Mammary epithelial cell (primary cell): ENCODE measurements at regions of chr7 and their contacts with region 1.

Region 1: DNA sequence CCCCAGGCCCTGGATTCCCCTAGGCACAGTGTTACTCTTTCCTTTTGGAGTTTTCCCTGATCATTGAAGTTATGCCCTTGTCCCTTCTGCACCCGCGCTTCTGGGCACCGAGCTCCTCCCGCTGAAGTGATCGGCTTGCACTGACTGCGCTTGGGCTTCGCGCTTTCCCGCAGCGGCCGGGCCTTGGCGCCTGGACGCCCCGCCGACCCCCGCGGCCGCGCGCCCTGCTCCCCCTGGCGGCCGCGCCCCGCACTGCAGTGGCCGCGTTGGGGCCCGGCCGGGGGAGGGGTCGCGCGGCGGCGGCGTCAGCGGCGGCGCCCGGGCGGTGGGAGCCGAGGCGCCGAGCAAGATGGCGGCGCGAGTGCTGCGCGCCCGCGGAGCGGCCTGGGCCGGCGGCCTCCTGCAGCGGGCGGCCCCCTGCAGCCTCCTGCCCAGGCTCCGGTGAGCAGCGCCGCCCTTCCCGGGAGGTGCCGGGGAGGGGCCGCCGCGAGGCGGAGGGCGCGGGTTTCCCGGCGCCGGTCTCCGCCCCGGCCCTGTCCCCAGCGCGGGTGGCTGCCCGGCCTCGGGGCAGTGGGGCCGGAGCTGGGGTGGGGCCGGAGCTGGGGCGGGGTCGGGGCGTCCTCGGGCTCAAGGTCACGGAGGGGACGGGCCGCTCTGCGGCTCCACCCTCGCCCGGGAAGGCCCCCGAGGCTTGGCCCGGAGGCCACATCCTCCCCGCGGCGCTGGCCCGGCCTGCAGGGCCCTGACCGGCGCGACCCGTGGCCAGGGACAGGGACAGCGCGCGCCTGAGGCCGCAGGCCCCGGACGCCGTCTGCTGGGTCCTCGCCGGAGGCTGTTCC is at the start of gene NIPSNAP2:
- DNase-seq: peak; percentile 30
- H3K4me3 ChIP-seq: peak within 1 kb of the TSS; percentile 51 to 64 (median 60)
- H3K27ac ChIP-seq: peak within 1 kb of the TSS; percentile 68
- H3K4me1 ChIP-seq: peaks cover 18% of the 10 kb centered on the region
- H3K27me3 ChIP-seq: no peaks in the 10 kb centered on the region
- CTCF ChIP-seq: peak; percentile 16 to 37
- total RNA-seq, gene NIPSNAP2: 56.5 to 60.7 TPM

Region 2: DNA sequence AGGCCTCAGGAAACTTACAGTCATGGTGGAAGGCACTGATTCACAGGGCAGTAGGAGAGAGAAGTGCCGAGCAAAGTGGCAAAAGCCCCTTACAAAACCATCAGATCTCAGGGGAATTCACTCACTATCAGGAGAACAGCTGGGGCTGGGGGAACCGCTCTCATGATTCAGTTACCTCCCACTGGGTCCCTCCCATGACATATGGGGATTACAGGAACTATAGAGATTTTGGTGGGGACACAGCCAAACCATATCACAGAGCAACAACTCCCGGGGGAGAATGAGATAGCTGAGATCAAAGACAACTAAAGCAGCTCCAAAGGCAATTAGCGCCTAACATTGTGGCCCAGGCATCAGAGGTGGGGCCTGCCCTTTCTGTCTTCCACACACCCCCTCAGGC is 306.8 kb before region 1 on chr7:
- CTCF ChIA-PET with region 1: no interaction called
- dilution Hi-C with region 1: no loop called
- in situ Hi-C with region 1: no loop called
- intact Hi-C with region 1: no loop called
- DNase-seq: no peak
- H3K4me3 ChIP-seq: no peak overlapping the region
- H3K27ac ChIP-seq: no peak overlapping the region
- H3K4me1 ChIP-seq: no peaks in the 10 kb centered on the region
- H3K27me3 ChIP-seq: no peaks in the 10 kb centered on the region
- CTCF ChIP-seq: no peak

Region 3: DNA sequence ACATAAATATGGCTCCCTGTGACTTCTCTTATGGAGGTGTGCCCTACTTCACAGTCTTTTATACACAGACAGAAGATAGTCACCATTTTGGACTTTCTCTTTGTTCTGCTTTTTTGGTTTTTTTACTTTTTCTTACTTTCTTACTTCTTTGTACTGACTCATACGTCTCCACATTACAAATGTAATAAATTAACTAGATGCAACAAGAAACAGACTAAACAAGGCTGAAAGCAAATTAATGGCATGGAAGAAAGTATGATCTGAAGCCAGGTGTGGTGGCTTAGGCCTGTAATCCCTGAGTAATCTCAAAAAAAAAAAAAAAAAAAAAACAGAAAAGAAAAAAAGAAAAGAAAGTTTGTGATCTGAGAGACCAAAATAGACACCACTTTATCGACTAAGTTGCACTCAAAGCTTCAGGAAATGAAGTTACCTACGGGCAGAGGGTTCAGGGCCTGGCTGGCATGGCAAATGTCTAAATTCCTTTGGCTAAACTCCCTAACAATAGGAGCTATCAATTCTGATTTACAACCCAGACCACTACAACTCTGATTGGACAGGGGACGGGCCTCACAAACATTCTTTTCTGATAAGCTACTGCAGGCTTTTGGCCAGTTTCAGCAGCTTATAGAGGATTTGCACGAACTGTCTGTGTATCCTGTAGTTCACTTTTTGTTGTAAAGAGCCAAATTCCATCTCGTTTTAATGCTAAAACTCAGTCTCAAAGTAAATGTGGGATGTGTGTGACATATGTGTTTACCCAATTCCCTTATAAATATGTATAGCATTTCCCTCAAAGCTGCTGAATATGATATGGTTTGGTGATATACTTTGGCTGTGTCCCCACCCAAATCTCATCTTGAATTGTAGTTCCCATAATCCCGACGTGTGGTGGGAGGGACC is 231.0 kb before region 1 on chr7:
- CTCF ChIA-PET with region 1: no interaction called
- dilution Hi-C with region 1: no loop called
- in situ Hi-C with region 1: no loop called
- intact Hi-C with region 1: no loop called
- DNase-seq: no peak
- H3K4me3 ChIP-seq: no peak overlapping the region
- H3K27ac ChIP-seq: no peak overlapping the region
- H3K4me1 ChIP-seq: no peaks in the 10 kb centered on the region
- H3K27me3 ChIP-seq: no peaks in the 10 kb centered on the region
- CTCF ChIP-seq: no peak

Region 4: DNA sequence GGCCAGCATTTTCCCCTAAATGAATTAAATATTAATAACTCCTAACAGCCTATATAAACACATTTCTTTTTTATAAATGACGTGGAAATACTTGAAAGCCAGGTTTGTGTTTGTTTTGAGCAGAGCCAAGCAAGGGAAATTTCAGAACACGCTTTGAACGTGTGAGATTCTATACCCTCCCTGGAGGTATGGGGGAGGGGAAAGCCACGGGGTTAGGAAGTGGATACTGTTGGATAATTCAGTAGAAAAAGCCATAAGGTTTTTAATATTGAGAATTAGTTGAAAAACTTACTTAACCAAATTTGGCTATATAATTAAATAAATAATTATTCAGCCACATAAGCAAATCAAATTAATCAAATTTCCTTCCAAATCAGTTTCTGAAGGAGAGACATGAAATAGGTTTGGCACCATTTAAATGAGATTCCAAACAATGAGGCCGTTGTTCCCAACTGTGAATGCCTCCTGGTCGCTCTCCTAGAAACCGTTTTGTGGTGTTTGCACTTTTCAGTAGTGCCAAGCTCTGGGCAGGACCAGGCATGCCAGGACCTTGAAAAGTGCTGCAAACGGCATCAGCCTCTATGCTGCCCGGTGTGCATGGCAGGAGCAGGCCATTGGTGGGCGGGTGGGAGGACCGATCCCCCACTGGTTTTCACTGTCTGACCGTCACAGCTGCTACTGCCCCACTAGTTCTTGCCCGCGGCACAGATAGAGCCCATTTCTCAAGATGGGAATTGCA is 190.0 kb before region 1 on chr7:
- CTCF ChIA-PET with region 1: no interaction called
- dilution Hi-C with region 1: no loop called
- in situ Hi-C with region 1: no loop called
- intact Hi-C with region 1: loop called (anchors 5 kb)
- DNase-seq: peak; percentile 90
- H3K4me3 ChIP-seq: peak overlapping the region in 1 of 3 experiments; percentile 2
- H3K27ac ChIP-seq: peak overlapping the region; percentile 91
- H3K4me1 ChIP-seq: peaks cover 16% of the 10 kb centered on the region
- H3K27me3 ChIP-seq: no peaks in the 10 kb centered on the region
- CTCF ChIP-seq: no peak

Region 5: GRCh38 chr7:55887821-55888247 is 76.6 kb before region 1 on chr7:
- CTCF ChIA-PET with region 1: no interaction called
- dilution Hi-C with region 1: no loop called
- in situ Hi-C with region 1: no loop called
- intact Hi-C with region 1: loop called (anchors 1 kb)
- DNase-seq: no peak
- H3K4me3 ChIP-seq: peak overlapping the region; percentile 59 to 88 (median 71)
- H3K27ac ChIP-seq: peak overlapping the region; percentile 39
- H3K4me1 ChIP-seq: no peaks in the 10 kb centered on the region
- H3K27me3 ChIP-seq: no peaks in the 10 kb centered on the region
- CTCF ChIP-seq: no peak

Region 6: GRCh38 chr7:55951637-55952351 is 12.7 kb before region 1 on chr7 and contains the start of gene MRPS17:
- CTCF ChIA-PET with region 1: no interaction called
- dilution Hi-C with region 1: no loop called
- in situ Hi-C with region 1: no loop called
- intact Hi-C with region 1: loop called (anchors 2 kb)
- DNase-seq: peak; percentile 87
- H3K4me3 ChIP-seq: peak within 1 kb of the TSS; percentile 68 to 90 (median 77)
- H3K27ac ChIP-seq: peak within 1 kb of the TSS; percentile 75
- H3K4me1 ChIP-seq: peaks cover 4% of the 10 kb centered on the region
- H3K27me3 ChIP-seq: no peaks in the 10 kb centered on the region
- CTCF ChIP-seq: no peak
- total RNA-seq, gene MRPS17: 21.8 to 33.8 TPM

Region 7: GRCh38 chr7:56033671-56034432 is 69.4 kb after region 1 on chr7:
- CTCF ChIA-PET with region 1: no interaction called
- dilution Hi-C with region 1: no loop called
- in situ Hi-C with region 1: no loop called
- intact Hi-C with region 1: no loop called
- DNase-seq: peak; percentile 68
- H3K4me3 ChIP-seq: peak overlapping the region; percentile 63 to 65 (median 64)
- H3K27ac ChIP-seq: peak overlapping the region; percentile 64
- H3K4me1 ChIP-seq: no peaks in the 10 kb centered on the region
- H3K27me3 ChIP-seq: no peaks in the 10 kb centered on the region
- CTCF ChIP-seq: peak; percentile 9 to 50